ENCODE measurements at regions of chr1 and their contacts with region 1.

Region 1: GRCh38 chr1:64915381-64916274 is 50.7 kb downstream of the JAK1 start:
- DNase-seq: no peak
- ATAC-seq: peak; percentile 48 to 63 (median 59)
- H3K4me3 ChIP-seq: no peak overlapping the region
- H3K4me3 Mint-ChIP-seq: peak overlapping the region; percentile 71
- H3K27ac ChIP-seq: no peak overlapping the region
- H3K27ac Mint-ChIP-seq: peak overlapping the region; percentile 84 to 93
- H3K4me1 ChIP-seq: peaks cover 58% of the 10 kb centered on the region
- H3K4me1 Mint-ChIP-seq: peaks cover 94 to 95% of the 10 kb centered on the region in 2 donors
- H3K27me3 ChIP-seq: no peaks in the 10 kb centered on the region
- H3K27me3 Mint-ChIP-seq: no peaks in the 10 kb centered on the region
- CTCF ChIP-seq: no peak

Region 2: GRCh38 chr1:64898107-64898845 is 17.4 kb before region 1 on chr1:
- intact Hi-C with region 1: loop called (anchors 2 kb)
- DNase-seq: peak; percentile 44 to 49
- ATAC-seq: peak; percentile 52 to 72 (median 72)
- H3K4me3 ChIP-seq: no peak overlapping the region
- H3K4me3 Mint-ChIP-seq: peak overlapping the region; percentile 7
- H3K27ac ChIP-seq: peak overlapping the region; percentile 51
- H3K27ac Mint-ChIP-seq: peak overlapping the region; percentile 86 to 93
- H3K4me1 ChIP-seq: peaks cover 53% of the 10 kb centered on the region
- H3K4me1 Mint-ChIP-seq: peaks cover 96 to 99% of the 10 kb centered on the region in 2 donors
- H3K27me3 ChIP-seq: no peaks in the 10 kb centered on the region
- H3K27me3 Mint-ChIP-seq: no peaks in the 10 kb centered on the region
- CTCF ChIP-seq: no peak

Region 3: GRCh38 chr1:65067491-65068201 is 152.0 kb after region 1 on chr1:
- intact Hi-C with region 1: no loop called
- DNase-seq: peak; percentile 47 to 84
- ATAC-seq: peak; percentile 13 to 42 (median 14)
- H3K4me3 ChIP-seq: peak overlapping the region; percentile 74
- H3K4me3 Mint-ChIP-seq: peak overlapping the region; percentile 99
- H3K27ac ChIP-seq: peak overlapping the region; percentile 91
- H3K27ac Mint-ChIP-seq: peak overlapping the region; percentile 97
- H3K4me1 ChIP-seq: peaks cover 19% of the 10 kb centered on the region
- H3K4me1 Mint-ChIP-seq: peaks cover 44 to 54% of the 10 kb centered on the region in 2 donors
- H3K27me3 ChIP-seq: no peaks in the 10 kb centered on the region
- H3K27me3 Mint-ChIP-seq: no peaks in the 10 kb centered on the region
- CTCF ChIP-seq: no peak

Measured in natural killer cell (primary cell).